Heart right ventricle (tissue), 16 donors: ENCODE measurements at regions of chr12 and their contacts with region 1.

Region 1: GRCh38 chr12:49232940-49233841 is 31.7 kb upstream of the TUBA1C start:
- DNase-seq: peak; percentile 76 to 77
- ATAC-seq: peak; percentile 27 to 89 (median 72)
- H3K4me3 ChIP-seq: peak overlapping the region in 7 of 10 donors; percentile 14 to 73 (median 25)
- H3K27ac ChIP-seq: peak overlapping the region; percentile 79 to 97 (median 94)
- H3K4me1 ChIP-seq: peaks cover 6 to 50% (median 25%) of the 10 kb centered on the region in 9 donors
- H3K27me3 ChIP-seq: no peaks in the 10 kb centered on the region
- CTCF ChIP-seq: peak in 5 of 9 donors; percentile 9 to 39 (median 25)

Region 2: GRCh38 chr12:49088190-49088931 is 144.8 kb before region 1 on chr12:
- intact Hi-C with region 1: loop called in 9 of 10 experiments (anchors 1 to 10 kb)
- DNase-seq: peak; percentile 61 to 81
- ATAC-seq: peak; percentile 86 to 92 (median 90)
- H3K4me3 ChIP-seq: peak overlapping the region in 5 of 10 donors; percentile 13 to 24 (median 16)
- H3K27ac ChIP-seq: no peak overlapping the region
- H3K4me1 ChIP-seq: peaks cover 26 to 56% (median 51%) of the 10 kb centered on the region in 9 donors
- H3K27me3 ChIP-seq: peaks cover 7 to 51% (median 41%) of the 10 kb centered on the region in 7 donors
- CTCF ChIP-seq: peak; percentile 85 to 95 (median 92)

Region 3: GRCh38 chr12:49110464-49111155 is 122.6 kb before region 1 on chr12 and contains the start of gene LMBR1L:
- intact Hi-C with region 1: loop called in 1 of 10 experiments (anchors 1 kb)
- DNase-seq: peak; percentile 92 to 98
- ATAC-seq: peak; percentile 96 to 98 (median 97)
- H3K4me3 ChIP-seq: peak within 1 kb of the TSS; percentile 67 to 100 (median 93)
- H3K27ac ChIP-seq: peak within 1 kb of the TSS; percentile 93 to 100 (median 98)
- H3K4me1 ChIP-seq: peaks cover 11 to 51% (median 47%) of the 10 kb centered on the region in 9 donors
- H3K27me3 ChIP-seq: no peaks in the 10 kb centered on the region
- CTCF ChIP-seq: peak in 8 of 9 donors; percentile 37 to 64 (median 53)
- total RNA-seq, gene LMBR1L: 21.5 to 51.8 (median 30.8) TPM

Region 4: GRCh38 chr12:49130151-49131050 is 102.8 kb before region 1 on chr12:
- intact Hi-C with region 1: loop called in 9 of 10 experiments (anchors 2 to 10 kb)
- DNase-seq: peak; percentile 95
- ATAC-seq: peak; percentile 86 to 94 (median 90)
- H3K4me3 ChIP-seq: peak overlapping the region; percentile 66 to 98 (median 86)
- H3K27ac ChIP-seq: peak overlapping the region; percentile 94 to 100 (median 99)
- H3K4me1 ChIP-seq: peaks cover 4 to 42% (median 31%) of the 10 kb centered on the region in 9 donors
- H3K27me3 ChIP-seq: no peaks in the 10 kb centered on the region
- CTCF ChIP-seq: peak; percentile 74 to 98 (median 93)

Region 5: GRCh38 chr12:49188914-49189367 is 44.2 kb before region 1 on chr12 and contains the start of gene TUBA1A:
- intact Hi-C with region 1: loop called in 8 of 10 experiments (anchors 1 to 5 kb)
- DNase-seq: peak; percentile 86 to 96
- ATAC-seq: peak; percentile 91 to 95 (median 93)
- H3K4me3 ChIP-seq: peak within 1 kb of the TSS; percentile 60 to 98 (median 87)
- H3K27ac ChIP-seq: peak within 1 kb of the TSS; percentile 90 to 100 (median 99)
- H3K4me1 ChIP-seq: peaks cover 5 to 33% (median 30%) of the 10 kb centered on the region in 9 donors
- H3K27me3 ChIP-seq: no peaks in the 10 kb centered on the region
- CTCF ChIP-seq: peak in 1 of 9 donors; percentile 16
- total RNA-seq, gene TUBA1A: 93.9 to 258 (median 134) TPM

Region 6: DNA sequence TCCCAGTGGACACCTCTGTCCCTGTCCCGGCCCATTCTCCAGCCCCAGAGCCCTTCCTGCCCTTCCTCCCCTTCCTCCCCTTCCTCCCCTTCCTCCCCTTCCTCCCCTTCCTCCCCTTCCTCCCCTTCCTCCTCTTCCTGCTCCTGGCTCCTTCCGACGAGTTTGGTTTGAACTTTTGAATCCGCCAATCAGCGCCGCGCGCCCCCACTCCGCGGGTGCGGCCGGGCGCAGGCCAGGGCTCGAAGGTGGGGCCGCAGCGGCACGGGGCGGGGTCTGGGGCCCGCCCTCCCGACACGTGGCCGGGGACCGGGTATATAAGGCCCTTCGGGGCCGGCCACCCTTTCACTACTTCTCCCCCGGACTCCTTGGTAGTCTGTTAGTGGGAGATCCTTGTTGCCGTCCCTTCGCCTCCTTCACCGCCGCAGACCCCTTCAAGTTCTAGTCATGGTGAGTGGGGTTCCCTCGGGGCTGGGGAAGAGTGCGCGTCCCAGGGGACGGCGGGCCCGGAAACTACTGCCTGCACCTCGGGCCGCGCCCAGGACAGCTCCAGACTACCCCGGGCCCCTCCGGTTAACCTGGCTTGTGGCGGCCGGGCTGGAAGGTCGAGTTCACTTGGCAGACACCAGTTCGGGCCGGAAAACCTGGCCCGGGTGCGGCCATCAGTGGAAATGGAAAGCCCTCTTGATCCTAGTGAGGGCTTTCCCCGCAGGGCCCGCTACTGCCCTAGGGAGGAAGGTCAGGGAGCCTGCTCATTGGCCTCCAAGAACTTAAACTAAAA is 31.7 kb after region 1 on chr12 and contains the start of gene TUBA1C:
- intact Hi-C with region 1: loop called in 1 of 10 experiments (anchors 2 kb)
- DNase-seq: peak; percentile 90 to 95
- ATAC-seq: peak; percentile 95 to 98 (median 97)
- H3K4me3 ChIP-seq: peak within 1 kb of the TSS; percentile 67 to 93 (median 78)
- H3K27ac ChIP-seq: peak within 1 kb of the TSS; percentile 70 to 99 (median 92)
- H3K4me1 ChIP-seq: peaks cover 0 to 80% (median 23%) of the 10 kb centered on the region in 9 donors
- H3K27me3 ChIP-seq: no peaks in the 10 kb centered on the region
- CTCF ChIP-seq: no peak
- total RNA-seq, gene TUBA1C: 25.9 to 106 (median 53.1) TPM

Region 7: GRCh38 chr12:49451468-49452259 is 218.5 kb after region 1 on chr12:
- intact Hi-C with region 1: no loop called
- DNase-seq: no peak
- ATAC-seq: no peak
- H3K4me3 ChIP-seq: no peak overlapping the region
- H3K27ac ChIP-seq: no peak overlapping the region
- H3K4me1 ChIP-seq: peaks cover 0 to 9% (median 0%) of the 10 kb centered on the region in 9 donors
- H3K27me3 ChIP-seq: no peaks in the 10 kb centered on the region
- CTCF ChIP-seq: no peak